ENCODE measurements at regions of chr5 and their contacts with region 1.

Region 1: GRCh38 chr5:78113689-78114264 is 180.7 kb downstream of the AP3B1 start:
- DNase-seq: no peak
- ATAC-seq: peak; percentile 69
- H3K4me3 ChIP-seq: peak overlapping the region; percentile 22; the same call in 1 of the 2 replicates
- H3K27ac ChIP-seq: peak overlapping the region; percentile 40; the same call in 1 of the 2 replicates
- H3K4me1 ChIP-seq: peaks cover 31% of the 10 kb centered on the region; the same call in 1 of the 2 replicates
- H3K27me3 ChIP-seq: no peaks in the 10 kb centered on the region
- CTCF ChIP-seq: no peak
- EP300 ChIP-seq: no peak
- POLR2A ChIP-seq: no peak
- RAD21 ChIP-seq: no peak

Region 2: DNA sequence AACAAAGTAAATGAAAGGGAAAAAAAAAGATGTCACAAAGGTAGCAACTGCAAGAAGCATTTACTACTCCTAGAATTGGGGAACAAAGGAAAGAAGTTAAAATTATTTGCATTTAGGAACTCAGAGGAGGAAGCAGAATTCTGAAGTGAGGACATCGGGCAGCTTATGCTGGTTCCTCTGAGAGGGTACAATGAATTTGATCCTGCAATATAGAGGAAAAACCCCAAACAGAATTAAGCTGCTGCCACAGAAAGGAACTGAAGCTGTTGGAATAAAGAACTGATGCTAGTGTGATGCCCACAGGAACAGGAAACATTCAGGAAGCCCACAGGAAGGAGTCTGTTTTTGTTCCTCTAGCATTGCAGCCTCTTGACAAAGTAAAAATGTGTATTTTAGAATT is 315.3 kb before region 1 on chr5:
- CTCF ChIA-PET with region 1: no interaction called
- POLR2A ChIA-PET with region 1: no interaction called
- RAD21 ChIA-PET with region 1: no interaction called
- SMC1A ChIA-PET with region 1: no interaction called
- in situ Hi-C with region 1: no loop called
- intact Hi-C with region 1: no loop called
- DNase-seq: no peak
- ATAC-seq: no peak
- H3K4me3 ChIP-seq: no peak overlapping the region
- H3K27ac ChIP-seq: no peak overlapping the region
- H3K4me1 ChIP-seq: no peaks in the 10 kb centered on the region
- H3K27me3 ChIP-seq: peaks cover 0 to 2% of the 10 kb centered on the region in 2 experiments; a peak in 1 of 4 replicates
- CTCF ChIP-seq: no peak
- EP300 ChIP-seq: no peak
- POLR2A ChIP-seq: no peak
- RAD21 ChIP-seq: no peak

Region 3: GRCh38 chr5:78102500-78102899 is 11.3 kb before region 1 on chr5:
- CTCF ChIA-PET with region 1: interaction called, 3 read pairs
- POLR2A ChIA-PET with region 1: interaction called, 3 read pairs
- RAD21 ChIA-PET with region 1: no interaction called
- SMC1A ChIA-PET with region 1: interaction called, 10 read pairs
- in situ Hi-C with region 1: no loop called
- intact Hi-C with region 1: no loop called
- DNase-seq: no peak
- ATAC-seq: no peak
- H3K4me3 ChIP-seq: no peak overlapping the region
- H3K27ac ChIP-seq: no peak overlapping the region
- H3K4me1 ChIP-seq: no peaks in the 10 kb centered on the region
- H3K27me3 ChIP-seq: no peaks in the 10 kb centered on the region
- CTCF ChIP-seq: no peak
- EP300 ChIP-seq: no peak
- POLR2A ChIP-seq: no peak
- RAD21 ChIP-seq: no peak

Region 4: DNA sequence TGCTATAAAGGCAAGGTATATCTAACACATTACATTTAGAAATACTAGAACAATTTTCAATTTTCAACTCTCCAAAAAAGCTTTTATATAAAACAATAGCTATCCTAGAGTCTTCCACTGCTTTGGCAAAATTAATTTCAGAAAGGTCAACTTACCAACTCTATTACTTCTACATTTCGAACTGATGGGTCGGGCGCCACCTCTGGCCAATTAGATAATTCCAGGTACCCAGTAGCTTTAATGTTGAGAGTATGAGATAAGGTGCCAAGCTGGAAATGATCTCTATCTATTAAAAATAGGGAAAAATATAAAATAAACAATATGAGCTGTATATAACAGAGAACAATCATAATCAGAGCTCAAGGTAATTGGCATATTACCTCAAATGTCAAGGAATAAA is 14.1 kb after region 1 on chr5:
- CTCF ChIA-PET with region 1: interaction called, 8 read pairs
- POLR2A ChIA-PET with region 1: interaction called, 3 read pairs
- RAD21 ChIA-PET with region 1: interaction called, 3 read pairs
- SMC1A ChIA-PET with region 1: interaction called, 11 read pairs
- in situ Hi-C with region 1: no loop called
- intact Hi-C with region 1: no loop called
- DNase-seq: no peak
- ATAC-seq: 0 out of 3 replicates have a peak, but pooled peaks have one; percentile 38
- H3K4me3 ChIP-seq: no peak overlapping the region
- H3K27ac ChIP-seq: no peak overlapping the region
- H3K4me1 ChIP-seq: no peaks in the 10 kb centered on the region
- H3K27me3 ChIP-seq: no peaks in the 10 kb centered on the region
- CTCF ChIP-seq: peak in 2 of 3 experiments; percentile 20 to 28; a peak in 2 of 6 replicates
- EP300 ChIP-seq: no peak
- POLR2A ChIP-seq: no peak
- RAD21 ChIP-seq: no peak